Naive thymus-derived CD8-positive, alpha-beta T cell (primary cell): ENCODE measurements at regions of chr11 and their contacts with region 1.

Region 1: GRCh38 chr11:61111786-61112517 is 9.7 kb downstream of the CD5 start:
- DNase-seq: peak in 8 of 10 donors; percentile 43 to 76 (median 65)
- ATAC-seq: peak; percentile 74 to 88
- H3K4me3 Mint-ChIP-seq: peak overlapping the region; percentile 70 to 94 (median 85)
- H3K27ac Mint-ChIP-seq: peak overlapping the region in 9 of 10 donors; percentile 89 to 97 (median 94)
- H3K4me1 Mint-ChIP-seq: peaks cover 57 to 100% (median 94%) of the 10 kb centered on the region in 4 donors
- H3K27me3 Mint-ChIP-seq: no peaks in the 10 kb centered on the region

Region 2: GRCh38 chr11:60994541-60995080 is 117.3 kb before region 1 on chr11:
- POLR2A ChIA-PET with region 1: no interaction called
- DNase-seq: no peak
- ATAC-seq: peak in 1 of 2 donors; percentile 34
- H3K4me3 Mint-ChIP-seq: peak overlapping the region in 8 of 10 donors; percentile 32 to 66 (median 59)
- H3K27ac Mint-ChIP-seq: peak overlapping the region; percentile 57 to 94 (median 85)
- H3K4me1 Mint-ChIP-seq: peaks cover 35 to 80% (median 64%) of the 10 kb centered on the region in 4 donors
- H3K27me3 Mint-ChIP-seq: no peaks in the 10 kb centered on the region

Region 3: GRCh38 chr11:61028272-61028761 is 83.6 kb before region 1 on chr11:
- POLR2A ChIA-PET with region 1: interaction called, 13 read pairs
- DNase-seq: peak; percentile 44 to 84 (median 57)
- ATAC-seq: peak; percentile 7 to 31
- H3K4me3 Mint-ChIP-seq: peak overlapping the region; percentile 78 to 98 (median 86)
- H3K27ac Mint-ChIP-seq: peak overlapping the region; percentile 95 to 99 (median 98)
- H3K4me1 Mint-ChIP-seq: peaks cover 41 to 90% (median 80%) of the 10 kb centered on the region in 4 donors
- H3K27me3 Mint-ChIP-seq: no peaks in the 10 kb centered on the region

Region 4: GRCh38 chr11:61071208-61071681 is 40.7 kb before region 1 on chr11:
- POLR2A ChIA-PET with region 1: interaction called, 15 read pairs
- DNase-seq: peak in 8 of 10 donors; percentile 45 to 81 (median 69)
- ATAC-seq: peak; percentile 97 to 99
- H3K4me3 Mint-ChIP-seq: peak overlapping the region; percentile 64 to 87 (median 78)
- H3K27ac Mint-ChIP-seq: peak overlapping the region; percentile 90 to 98 (median 96)
- H3K4me1 Mint-ChIP-seq: peaks cover 38 to 88% (median 85%) of the 10 kb centered on the region in 4 donors
- H3K27me3 Mint-ChIP-seq: no peaks in the 10 kb centered on the region

Region 5: GRCh38 chr11:61091373-61092279 is 20.3 kb before region 1 on chr11:
- POLR2A ChIA-PET with region 1: interaction called, 20 read pairs
- DNase-seq: no peak
- ATAC-seq: peak; percentile 14 to 26
- H3K4me3 Mint-ChIP-seq: peak overlapping the region; percentile 19 to 79 (median 58)
- H3K27ac Mint-ChIP-seq: peak overlapping the region; percentile 68 to 90 (median 82)
- H3K4me1 Mint-ChIP-seq: peaks cover 34 to 55% (median 47%) of the 10 kb centered on the region in 4 donors
- H3K27me3 Mint-ChIP-seq: no peaks in the 10 kb centered on the region

Region 6: GRCh38 chr11:61129639-61130523 is 17.9 kb after region 1 on chr11:
- POLR2A ChIA-PET with region 1: interaction called, 13 read pairs
- DNase-seq: peak; percentile 80 to 93 (median 89)
- ATAC-seq: peak; percentile 87 to 90
- H3K4me3 Mint-ChIP-seq: peak overlapping the region; percentile 0 to 75 (median 61)
- H3K27ac Mint-ChIP-seq: peak overlapping the region; percentile 36 to 93 (median 84)
- H3K4me1 Mint-ChIP-seq: peaks cover 11 to 34% (median 26%) of the 10 kb centered on the region in 4 donors
- H3K27me3 Mint-ChIP-seq: no peaks in the 10 kb centered on the region

Region 7: GRCh38 chr11:61460474-61460881 is 348.5 kb after region 1 on chr11:
- POLR2A ChIA-PET with region 1: no interaction called
- DNase-seq: no peak
- ATAC-seq: no peak
- H3K4me3 Mint-ChIP-seq: no peak overlapping the region
- H3K27ac Mint-ChIP-seq: no peak overlapping the region
- H3K4me1 Mint-ChIP-seq: peaks cover 0 to 13% (median 6%) of the 10 kb centered on the region in 4 donors
- H3K27me3 Mint-ChIP-seq: no peaks in the 10 kb centered on the region